CD14-positive monocyte (primary cell): ENCODE measurements at regions of chr20 and their contacts with region 1.

Region 1: GRCh38 chr20:63707549-63708300 is at the starts of genes ARFRP1 and ZGPAT:
- DNase-seq: peak; percentile 83 to 87 (median 86)
- H3K4me3 ChIP-seq: peak within 1 kb of the TSS; percentile 35 to 86 (median 71)
- H3K4me3 Mint-ChIP-seq: peak within 1 kb of the TSS; percentile 82 to 88
- H3K27ac ChIP-seq: peak within 1 kb of the TSS; percentile 41 to 81
- H3K27ac Mint-ChIP-seq: peak within 1 kb of the TSS; percentile 71 to 89 (median 82)
- H3K4me1 ChIP-seq: peaks cover 23 to 30% of the 10 kb centered on the region in 2 donors
- H3K4me1 Mint-ChIP-seq: peaks cover 34% of the 10 kb centered on the region
- H3K27me3 ChIP-seq: no peaks in the 10 kb centered on the region
- H3K27me3 Mint-ChIP-seq: peaks cover 0 to 3% (median 0%) of the 10 kb centered on the region in 3 donors
- CTCF ChIP-seq: no peak
- polyA plus RNA-seq, gene ARFRP1: 18.2 to 31.1 (median 20.7) TPM
- polyA plus RNA-seq, gene ZGPAT: 24.2 to 58.6 (median 28.3) TPM

Region 2: GRCh38 chr20:63657937-63658748 is 49.6 kb before region 1 on chr20 and contains the start of gene RTEL1:
- intact Hi-C with region 1: loop called (anchors 2 to 5 kb)
- DNase-seq: peak; percentile 87 to 90 (median 90)
- H3K4me3 ChIP-seq: peak within 1 kb of the TSS; percentile 70 to 96 (median 93)
- H3K4me3 Mint-ChIP-seq: peak within 1 kb of the TSS; percentile 95 to 96
- H3K27ac ChIP-seq: peak within 1 kb of the TSS; percentile 55 to 81
- H3K27ac Mint-ChIP-seq: peak within 1 kb of the TSS; percentile 90 to 98 (median 95)
- H3K4me1 ChIP-seq: peaks cover 27 to 32% of the 10 kb centered on the region in 2 donors
- H3K4me1 Mint-ChIP-seq: peaks cover 35% of the 10 kb centered on the region
- H3K27me3 ChIP-seq: peaks cover 0 to 14% of the 10 kb centered on the region in 2 donors
- H3K27me3 Mint-ChIP-seq: peaks cover 5 to 15% (median 12%) of the 10 kb centered on the region in 3 donors
- CTCF ChIP-seq: no peak
- polyA plus RNA-seq, gene RTEL1: 1.0 to 15.5 (median 4.8) TPM

Region 3: DNA sequence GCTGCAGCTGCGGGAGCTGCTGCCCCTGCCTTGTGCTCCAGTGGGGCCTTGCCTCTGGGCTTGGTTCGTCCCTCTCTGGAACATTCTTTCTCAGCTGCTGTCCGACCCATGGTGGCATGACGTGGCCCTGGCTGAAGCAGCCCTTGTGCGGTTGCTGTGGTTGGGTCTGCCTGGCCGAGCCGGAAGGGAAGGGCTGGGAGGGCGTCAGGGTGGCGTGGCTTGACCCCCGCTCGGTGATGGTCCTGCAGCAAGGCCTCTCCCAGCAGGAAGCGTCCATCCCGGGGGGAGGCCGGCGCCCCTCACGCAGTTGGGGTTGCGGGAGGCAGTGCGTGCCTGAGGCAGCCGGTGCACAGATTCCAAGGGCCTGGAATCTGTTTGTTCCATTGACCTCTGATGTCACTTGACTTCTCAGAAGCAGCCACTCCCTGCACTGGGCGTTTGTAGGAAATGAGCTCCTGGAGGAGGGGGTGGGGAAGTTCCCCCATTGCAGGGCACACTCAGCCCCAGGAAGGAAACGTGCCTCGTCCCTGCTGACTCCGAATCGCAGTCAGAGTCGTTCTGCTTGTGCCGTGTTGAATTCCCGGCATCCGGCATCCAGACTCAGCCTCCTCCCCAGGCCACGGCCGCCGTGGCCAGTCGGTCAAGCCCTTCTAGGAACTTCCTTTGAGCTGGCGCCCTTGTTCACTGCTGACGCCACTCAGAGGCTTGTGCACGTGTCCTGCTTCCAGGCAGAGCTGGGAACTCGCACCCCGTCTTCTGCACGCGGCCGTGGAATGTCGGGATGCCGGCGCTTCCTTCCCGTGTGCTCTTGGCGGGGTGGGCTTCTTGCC is 21.0 kb before region 1 on chr20:
- intact Hi-C with region 1: loop called in 1 of 2 experiments (anchors 2 kb)
- DNase-seq: peak; percentile 87 to 98 (median 95)
- H3K4me3 ChIP-seq: peak overlapping the region in 2 of 3 experiments; percentile 4 to 62
- H3K4me3 Mint-ChIP-seq: peak overlapping the region; percentile 64 to 73
- H3K27ac ChIP-seq: peak overlapping the region; percentile 94 to 96
- H3K27ac Mint-ChIP-seq: peak overlapping the region; percentile 92 to 96 (median 95)
- H3K4me1 ChIP-seq: peaks cover 31 to 44% of the 10 kb centered on the region in 2 donors
- H3K4me1 Mint-ChIP-seq: peaks cover 35% of the 10 kb centered on the region
- H3K27me3 ChIP-seq: no peaks in the 10 kb centered on the region
- H3K27me3 Mint-ChIP-seq: peaks cover 0 to 3% (median 0%) of the 10 kb centered on the region in 3 donors
- CTCF ChIP-seq: no peak